ENCODE measurements at regions of chr11 and their contacts with region 1.

Region 1: GRCh38 chr11:1682225-1682905 is 14.6 kb upstream of the KRTAP5-6 start:
- DNase-seq: no peak
- H3K4me3 ChIP-seq: no peak overlapping the region
- CTCF ChIP-seq: no peak

Region 2: DNA sequence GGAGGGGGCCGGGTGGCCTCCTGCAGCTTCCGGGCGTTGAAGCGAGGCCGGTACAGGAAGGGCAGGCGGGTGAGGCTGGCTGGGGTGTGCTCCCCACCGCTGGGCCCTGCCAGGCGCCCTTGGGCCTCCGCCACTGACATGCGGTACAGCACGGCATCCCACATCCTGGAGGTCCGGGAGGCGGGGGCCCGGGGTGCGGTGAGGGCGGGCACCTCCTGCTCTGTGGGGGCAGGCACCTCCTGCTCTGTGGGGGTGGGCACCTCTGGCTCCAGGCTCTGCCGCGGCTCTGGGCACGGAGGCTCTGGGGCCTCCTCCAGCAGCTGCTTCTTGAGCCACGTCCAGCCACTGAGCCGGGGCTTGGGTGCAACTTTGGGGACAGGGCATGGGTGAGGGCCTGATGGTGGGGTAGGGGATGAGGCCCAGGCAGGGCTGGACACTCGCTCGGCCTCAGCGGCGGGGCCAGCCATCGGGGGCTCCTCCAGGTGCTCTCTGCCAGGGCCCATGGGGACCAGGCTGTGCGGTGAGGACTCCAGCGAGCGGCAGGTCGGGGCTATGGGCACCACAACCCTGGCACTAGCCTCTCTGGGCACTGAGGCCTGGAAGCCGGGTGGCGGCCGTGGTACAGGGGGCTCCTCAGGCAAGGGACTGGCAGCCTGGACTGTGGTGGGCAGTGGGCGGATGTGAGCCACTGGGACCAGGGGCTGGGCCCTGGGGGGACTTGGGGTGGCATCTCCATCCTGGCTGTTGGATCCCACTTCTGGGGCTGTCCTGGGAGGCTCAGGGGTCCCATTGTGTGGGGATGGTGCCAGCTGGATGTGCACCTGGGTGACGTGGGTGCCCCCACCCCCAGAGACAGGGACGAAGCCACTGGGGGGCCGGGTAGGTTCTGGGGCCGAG is 207.1 kb after region 1 on chr11:
- in situ Hi-C with region 1: loop called (anchors 10 kb)
- DNase-seq: no peak
- H3K4me3 ChIP-seq: no peak overlapping the region
- CTCF ChIP-seq: no peak

Measured in astrocyte of the cerebellum (primary cell).